Heart left ventricle (tissue), 16 donors: ENCODE measurements at regions of chr1 and their contacts with region 1.

Region 1: GRCh38 chr1:208245185-208245705 is 1.1 kb upstream of the PLXNA2 start:
- DNase-seq: peak; percentile 89 to 95 (median 91)
- ATAC-seq: peak; percentile 73 to 87 (median 78)
- H3K4me3 ChIP-seq: peak overlapping the region in 11 of 12 donors; percentile 66 to 98 (median 88)
- H3K27ac ChIP-seq: peak overlapping the region; percentile 74 to 98 (median 92)
- H3K4me1 ChIP-seq: peaks cover 0 to 53% (median 29%) of the 10 kb centered on the region in 12 donors
- H3K27me3 ChIP-seq: peaks cover 0 to 14% (median 0%) of the 10 kb centered on the region in 9 donors
- CTCF ChIP-seq: peak; percentile 76 to 93 (median 83)
- POLR2A ChIP-seq: no peak

Region 2: DNA sequence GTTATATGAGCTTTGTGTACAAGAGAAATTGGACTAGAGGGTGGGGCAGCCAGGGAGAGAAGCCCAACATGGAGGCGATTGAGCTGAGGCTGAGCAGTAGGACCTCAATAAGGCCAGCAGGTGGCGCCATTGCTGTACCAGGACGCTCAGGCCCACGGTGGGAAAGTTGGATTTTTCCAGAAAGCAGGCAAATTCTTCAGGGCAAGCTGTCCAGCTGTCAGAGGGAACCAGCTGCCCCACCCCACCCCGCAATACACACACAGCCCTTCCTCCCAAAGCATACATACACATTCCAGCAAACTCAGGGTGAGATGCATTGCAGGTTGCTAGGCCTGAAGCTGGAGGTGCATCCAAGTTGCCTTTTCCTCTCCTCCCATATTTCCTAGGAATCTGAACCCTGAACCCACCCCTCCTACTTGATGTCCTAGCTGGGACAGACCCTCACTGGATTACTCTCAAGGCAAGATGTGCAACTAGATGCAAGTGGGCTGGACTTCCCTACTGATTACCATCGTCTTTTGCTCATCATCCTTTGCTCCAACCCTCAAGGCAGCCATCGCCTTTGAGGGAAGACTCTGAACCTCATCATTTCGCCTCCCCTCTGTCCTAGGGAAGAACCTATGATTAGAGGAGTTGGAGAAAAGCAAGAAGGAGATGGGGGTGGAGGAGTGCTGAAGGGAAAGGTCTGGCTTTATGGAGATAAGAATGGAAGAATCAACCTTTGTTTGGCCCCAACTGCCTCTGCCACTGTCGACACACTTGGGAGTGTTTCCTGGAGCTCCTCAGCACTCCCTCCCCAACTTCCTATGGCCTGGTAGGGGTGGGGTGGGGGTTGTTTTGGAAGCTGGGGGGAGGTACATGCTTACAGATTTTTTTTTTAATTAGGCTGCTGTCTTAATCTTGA is 359.9 kb before region 1 on chr1:
- intact Hi-C with region 1: loop called in 3 of 10 experiments (anchors 10 kb)
- DNase-seq: peak; percentile 85 to 91 (median 87)
- ATAC-seq: peak; percentile 84 to 93 (median 90)
- H3K4me3 ChIP-seq: no peak overlapping the region
- H3K27ac ChIP-seq: peak overlapping the region in 11 of 12 donors; percentile 51 to 91 (median 74)
- H3K4me1 ChIP-seq: peaks cover 16 to 84% (median 56%) of the 10 kb centered on the region in 12 donors
- H3K27me3 ChIP-seq: no peaks in the 10 kb centered on the region
- CTCF ChIP-seq: peak; percentile 93 to 98 (median 96)
- POLR2A ChIP-seq: peak in 1 of 2 donors; percentile 10

Region 3: DNA sequence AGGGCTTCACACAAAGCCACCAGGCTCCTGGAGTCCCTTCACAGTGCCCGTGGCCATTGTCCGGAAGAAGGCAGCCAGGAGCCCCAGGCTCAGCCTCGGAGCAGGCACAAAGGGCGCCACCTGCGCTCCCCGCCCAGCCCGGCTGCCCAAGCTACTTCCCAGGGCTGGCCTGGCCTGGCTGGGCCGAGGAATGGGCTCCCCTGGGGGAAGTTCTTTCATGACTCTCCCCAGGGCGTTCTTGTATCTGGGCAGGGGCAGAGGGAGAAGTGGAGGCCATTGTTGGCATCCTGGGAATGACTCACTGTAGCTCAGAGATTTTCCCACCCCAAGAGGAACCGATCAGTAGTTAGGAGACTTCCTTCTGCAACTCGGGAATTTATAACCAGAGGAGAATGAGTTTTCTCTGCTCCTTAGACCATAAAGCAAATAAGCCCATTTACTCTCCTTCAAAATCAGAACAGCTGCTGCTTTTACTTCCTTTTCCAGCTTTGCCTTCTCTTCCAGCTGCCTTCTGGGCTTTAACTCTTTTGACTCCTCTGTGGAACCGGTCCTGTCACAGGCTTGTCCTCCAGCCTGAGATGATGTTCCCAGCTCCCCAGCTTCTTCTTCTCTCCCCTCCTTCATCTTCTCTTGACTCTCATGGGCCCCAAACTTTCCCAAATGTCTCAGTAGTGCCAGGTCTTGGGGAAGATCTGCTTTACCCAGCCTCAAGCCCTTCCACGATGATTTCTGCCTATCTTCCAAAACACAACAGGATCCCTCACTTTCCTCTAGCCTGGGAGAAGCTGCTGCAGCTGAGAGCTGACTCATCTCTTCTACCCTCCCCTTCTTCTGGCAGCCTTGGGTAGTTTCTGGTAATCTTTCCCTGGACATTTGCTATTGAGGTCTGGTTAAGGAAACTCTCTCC is 215.6 kb before region 1 on chr1:
- intact Hi-C with region 1: loop called in 7 of 10 experiments (anchors 2 to 5 kb)
- DNase-seq: peak in 1 of 5 donors; percentile 32
- ATAC-seq: peak; percentile 39 to 74 (median 60)
- H3K4me3 ChIP-seq: peak overlapping the region in 2 of 12 donors; percentile 19 to 26
- H3K27ac ChIP-seq: peak overlapping the region; percentile 56 to 94 (median 77)
- H3K4me1 ChIP-seq: peaks cover 0 to 54% (median 21%) of the 10 kb centered on the region in 12 donors
- H3K27me3 ChIP-seq: no peaks in the 10 kb centered on the region
- CTCF ChIP-seq: no peak
- POLR2A ChIP-seq: no peak

Region 4: DNA sequence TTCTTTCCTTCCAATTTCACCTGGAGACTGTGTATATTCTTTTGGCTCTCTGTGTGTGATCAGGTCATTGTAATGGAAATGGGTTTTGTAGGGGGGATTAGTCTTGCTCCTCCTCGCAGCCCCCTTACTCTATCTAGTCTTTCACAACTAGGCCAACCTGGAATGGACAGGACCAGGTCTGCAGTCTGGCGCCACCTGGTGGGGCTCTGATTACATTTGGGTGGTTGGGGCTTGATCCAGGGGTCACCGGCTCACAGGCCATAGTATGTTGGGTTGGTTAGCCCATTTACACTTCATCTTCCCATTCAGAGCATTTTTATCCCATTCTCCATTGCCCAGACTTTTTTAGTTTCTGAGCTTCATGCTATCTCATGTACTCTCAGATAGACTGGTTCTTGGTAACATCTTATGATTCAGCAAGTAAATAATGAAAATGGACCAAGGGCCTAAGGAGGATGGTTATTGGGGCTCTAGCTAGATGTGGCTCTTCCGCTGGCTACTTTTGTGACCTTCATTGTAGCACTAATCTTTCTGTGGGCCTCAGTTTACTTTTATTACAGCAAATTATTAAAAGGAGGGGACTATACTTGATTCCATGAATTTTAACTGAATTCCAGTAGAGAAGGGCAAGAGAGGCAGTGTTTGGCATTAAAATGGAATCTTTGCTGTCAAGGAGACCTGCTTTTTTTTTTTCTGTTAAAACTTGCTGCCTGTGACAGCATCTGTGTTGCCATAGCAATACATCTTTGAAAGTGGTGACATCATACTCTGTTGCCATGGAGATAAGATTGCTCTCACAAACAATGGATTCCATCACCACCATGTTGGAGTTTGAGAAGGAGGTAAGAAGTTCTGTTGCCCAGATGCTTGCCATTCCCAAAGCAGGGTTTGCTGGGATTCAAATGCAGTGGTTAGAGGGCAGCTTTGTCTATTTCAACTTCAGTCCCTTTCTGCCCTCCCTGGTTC is 151.2 kb before region 1 on chr1:
- intact Hi-C with region 1: loop called in 2 of 10 experiments (anchors 2 to 5 kb)
- DNase-seq: peak; percentile 63 to 85 (median 71)
- ATAC-seq: peak; percentile 38 to 67 (median 59)
- H3K4me3 ChIP-seq: no peak overlapping the region
- H3K27ac ChIP-seq: no peak overlapping the region
- H3K4me1 ChIP-seq: peaks cover 0 to 25% (median 16%) of the 10 kb centered on the region in 12 donors
- H3K27me3 ChIP-seq: no peaks in the 10 kb centered on the region
- CTCF ChIP-seq: peak; percentile 65 to 84 (median 75)
- POLR2A ChIP-seq: no peak

Region 5: DNA sequence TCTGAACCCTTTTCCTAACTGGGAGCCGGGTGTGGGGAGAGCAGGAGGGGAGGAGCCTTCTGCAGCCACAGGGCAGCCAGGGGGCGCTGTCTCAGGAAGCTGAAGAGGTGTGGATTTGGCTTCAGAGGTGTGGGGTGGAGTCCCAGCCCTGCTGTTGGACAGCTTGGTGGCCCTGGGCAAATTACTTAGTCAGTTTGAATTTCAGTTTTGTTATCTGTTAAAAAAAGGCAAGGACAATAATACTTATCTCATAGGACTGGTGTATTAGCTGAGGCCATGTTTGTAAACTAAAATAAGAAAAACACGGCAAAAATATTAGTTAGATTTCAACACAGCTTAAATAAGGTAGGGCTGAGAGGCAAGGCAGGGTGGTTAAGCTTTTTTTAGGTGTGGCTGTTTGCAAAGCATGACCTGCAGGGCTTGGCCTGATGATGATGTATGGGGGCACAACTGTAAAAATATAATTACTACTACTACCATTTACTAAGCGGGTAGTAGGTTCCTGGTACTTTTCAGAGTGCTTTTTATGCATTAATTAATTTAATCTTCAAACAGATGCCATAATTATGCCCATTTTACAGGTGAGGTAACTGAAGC is 112.9 kb before region 1 on chr1:
- intact Hi-C with region 1: loop called in 6 of 10 experiments (anchors 1 to 5 kb)
- DNase-seq: peak; percentile 78 to 89 (median 82)
- ATAC-seq: peak; percentile 82 to 93 (median 90)
- H3K4me3 ChIP-seq: no peak overlapping the region
- H3K27ac ChIP-seq: peak overlapping the region in 1 of 12 donors; percentile 8
- H3K4me1 ChIP-seq: peaks cover 0 to 67% (median 12%) of the 10 kb centered on the region in 12 donors
- H3K27me3 ChIP-seq: no peaks in the 10 kb centered on the region
- CTCF ChIP-seq: peak; percentile 74 to 94 (median 84)
- POLR2A ChIP-seq: no peak